Dorsolateral prefrontal cortex (tissue), 120 donors: ENCODE measurements at regions of chr3 and their contacts with region 1.

Region 1: DNA sequence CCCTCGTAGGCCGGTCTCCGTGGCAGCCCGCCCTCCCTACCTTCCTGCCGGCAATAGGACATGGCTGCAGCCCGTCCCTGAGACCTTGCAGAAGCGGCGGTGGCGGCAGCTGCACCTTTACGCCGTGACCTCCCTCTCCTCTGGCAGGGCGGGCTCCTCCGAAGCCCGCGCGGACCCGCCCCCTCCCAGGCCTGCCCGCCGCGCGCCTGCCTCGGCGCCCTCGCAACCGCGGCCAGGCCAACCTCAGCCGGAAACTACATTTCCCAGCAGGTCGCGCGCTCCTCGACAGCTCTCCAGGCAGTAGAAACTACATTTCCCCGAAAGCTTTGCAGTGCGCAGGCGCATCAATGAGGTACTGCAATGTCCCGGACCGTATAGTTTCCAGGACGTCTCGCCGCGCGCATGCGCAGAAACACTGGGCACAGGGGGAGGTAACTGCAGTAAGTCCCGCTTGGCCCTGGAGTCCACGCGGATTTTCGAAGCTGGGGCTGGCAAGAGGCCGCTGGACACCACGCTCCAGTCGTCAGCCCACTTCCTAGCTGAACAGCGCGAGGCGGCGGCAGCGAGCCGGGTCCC is at the starts of genes CHCHD4 and TMEM43:
- DNase-seq: peak; percentile 99 to 100 (median 99)
- H3K4me3 ChIP-seq: peak within 1 kb of the TSS; percentile 70 to 100 (median 95)
- H3K27ac ChIP-seq: peak within 1 kb of the TSS; percentile 39 to 96 (median 89)
- H3K27me3 ChIP-seq: no peaks in the 10 kb centered on the region
- CTCF ChIP-seq: peak in 31 of 56 donors; percentile 7 to 55 (median 24)
- total RNA-seq, gene CHCHD4: 8.5 to 24.0 (median 16.1) TPM
- total RNA-seq, gene TMEM43: 23.1 to 38.3 (median 30.4) TPM

Region 2: DNA sequence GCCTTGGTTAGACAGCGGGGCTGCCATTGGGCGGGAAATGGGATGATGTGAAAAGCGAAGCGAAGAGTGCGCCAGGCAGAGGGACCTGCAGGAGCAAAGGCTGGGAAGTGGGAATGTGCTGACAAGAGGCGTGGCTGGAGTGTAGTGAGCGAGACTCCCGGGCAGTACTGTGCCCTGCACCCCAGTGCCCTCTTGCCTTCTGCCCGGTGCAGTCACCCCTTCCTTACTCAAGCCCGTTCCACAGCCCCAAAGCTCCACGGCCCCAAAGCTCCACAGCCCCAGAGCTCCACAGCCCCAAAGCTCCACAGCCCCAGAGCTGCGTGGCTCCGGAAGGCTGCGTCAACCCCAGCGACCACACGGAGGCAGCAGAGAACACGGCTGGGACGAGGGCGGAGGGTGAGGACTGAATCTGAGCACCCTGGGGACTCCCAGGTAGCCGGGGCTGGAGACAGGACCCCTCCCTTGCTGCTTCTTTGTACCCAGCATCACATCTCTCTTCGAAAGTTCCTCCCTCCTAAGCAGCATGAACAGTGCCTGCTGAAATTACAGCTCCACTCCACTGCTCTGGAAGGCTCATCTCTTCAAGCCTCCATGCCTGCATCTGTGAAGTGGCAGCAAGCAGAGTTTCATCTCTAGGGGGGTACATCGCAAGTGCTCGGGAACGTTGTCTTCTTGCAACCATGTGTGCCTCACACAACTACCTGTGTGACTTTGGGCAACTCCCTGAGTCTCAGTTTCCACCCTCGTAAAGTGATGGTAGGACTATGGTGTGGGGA is 466.9 kb before region 1 on chr3:
- intact Hi-C with region 1: loop called (anchors 5 to 10 kb)
- DNase-seq: peak in 8 of 10 donors; percentile 43 to 80 (median 60)
- H3K4me3 ChIP-seq: peak overlapping the region in 1 of 59 donors; percentile 9
- H3K27ac ChIP-seq: peak overlapping the region in 1 of 59 donors; percentile 28
- H3K27me3 ChIP-seq: peaks cover 0 to 7% (median 0%) of the 10 kb centered on the region in 45 donors
- CTCF ChIP-seq: peak in 55 of 56 donors; percentile 22 to 87 (median 77)

Region 3: DNA sequence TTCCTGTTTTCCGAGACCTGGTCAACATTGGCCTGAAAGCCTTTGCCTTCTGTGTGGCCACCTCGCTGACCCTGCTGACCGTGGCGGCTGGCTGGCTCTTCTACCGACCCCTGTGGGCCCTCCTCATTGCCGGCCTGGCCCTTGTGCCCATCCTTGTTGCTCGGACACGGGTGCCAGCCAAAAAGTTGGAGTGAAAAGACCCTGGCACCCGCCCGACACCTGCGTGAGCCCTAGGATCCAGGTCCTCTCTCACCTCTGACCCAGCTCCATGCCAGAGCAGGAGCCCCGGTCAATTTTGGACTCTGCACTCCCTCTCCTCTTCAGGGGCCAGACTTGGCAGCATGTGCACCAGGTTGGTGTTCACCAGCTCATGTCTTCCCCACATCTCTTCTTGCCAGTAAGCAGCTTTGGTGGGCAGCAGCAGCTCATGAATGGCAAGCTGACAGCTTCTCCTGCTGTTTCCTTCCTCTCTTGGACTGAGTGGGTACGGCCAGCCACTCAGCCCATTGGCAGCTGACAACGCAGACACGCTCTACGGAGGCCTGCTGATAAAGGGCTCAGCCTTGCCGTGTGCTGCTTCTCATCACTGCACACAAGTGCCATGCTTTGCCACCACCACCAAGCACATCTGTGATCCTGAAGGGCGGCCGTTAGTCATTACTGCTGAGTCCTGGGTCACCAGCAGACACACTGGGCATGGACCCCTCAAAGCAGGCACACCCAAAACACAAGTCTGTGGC is 17.1 kb after region 1 on chr3:
- intact Hi-C with region 1: loop called in 1 of 2 experiments (anchors 2 kb)
- DNase-seq: peak in 3 of 10 donors; percentile 32 to 67 (median 41)
- H3K4me3 ChIP-seq: no peak overlapping the region
- H3K27ac ChIP-seq: peak overlapping the region in 47 of 59 donors; percentile 1 to 94 (median 62)
- H3K27me3 ChIP-seq: no peaks in the 10 kb centered on the region
- CTCF ChIP-seq: no peak

Region 4: GRCh38 chr3:14461748-14462324 is 337.1 kb after region 1 on chr3:
- intact Hi-C with region 1: loop called in 1 of 2 experiments (anchors 10 kb)
- DNase-seq: peak in 8 of 10 donors; percentile 45 to 72 (median 60)
- H3K4me3 ChIP-seq: no peak overlapping the region
- H3K27ac ChIP-seq: peak overlapping the region in 22 of 59 donors; percentile 13 to 88 (median 76)
- H3K27me3 ChIP-seq: no peaks in the 10 kb centered on the region
- CTCF ChIP-seq: peak in 53 of 56 donors; percentile 33 to 73 (median 59)

Region 5: GRCh38 chr3:14651440-14652251 is 526.9 kb after region 1 on chr3 and contains the start of gene CCDC174:
- intact Hi-C with region 1: loop called (anchors 5 to 10 kb)
- DNase-seq: peak; percentile 86 to 98 (median 94)
- H3K4me3 ChIP-seq: peak within 1 kb of the TSS; percentile 65 to 99 (median 87)
- H3K27ac ChIP-seq: peak within 1 kb of the TSS; percentile 46 to 94 (median 86)
- H3K27me3 ChIP-seq: no peaks in the 10 kb centered on the region
- CTCF ChIP-seq: peak in 45 of 56 donors; percentile 7 to 65 (median 35)
- total RNA-seq, gene CCDC174: 15.8 to 38.0 (median 23.4) TPM